Panc1 (cell line): ENCODE measurements at regions of chr19 and their contacts with region 1.

Region 1: DNA sequence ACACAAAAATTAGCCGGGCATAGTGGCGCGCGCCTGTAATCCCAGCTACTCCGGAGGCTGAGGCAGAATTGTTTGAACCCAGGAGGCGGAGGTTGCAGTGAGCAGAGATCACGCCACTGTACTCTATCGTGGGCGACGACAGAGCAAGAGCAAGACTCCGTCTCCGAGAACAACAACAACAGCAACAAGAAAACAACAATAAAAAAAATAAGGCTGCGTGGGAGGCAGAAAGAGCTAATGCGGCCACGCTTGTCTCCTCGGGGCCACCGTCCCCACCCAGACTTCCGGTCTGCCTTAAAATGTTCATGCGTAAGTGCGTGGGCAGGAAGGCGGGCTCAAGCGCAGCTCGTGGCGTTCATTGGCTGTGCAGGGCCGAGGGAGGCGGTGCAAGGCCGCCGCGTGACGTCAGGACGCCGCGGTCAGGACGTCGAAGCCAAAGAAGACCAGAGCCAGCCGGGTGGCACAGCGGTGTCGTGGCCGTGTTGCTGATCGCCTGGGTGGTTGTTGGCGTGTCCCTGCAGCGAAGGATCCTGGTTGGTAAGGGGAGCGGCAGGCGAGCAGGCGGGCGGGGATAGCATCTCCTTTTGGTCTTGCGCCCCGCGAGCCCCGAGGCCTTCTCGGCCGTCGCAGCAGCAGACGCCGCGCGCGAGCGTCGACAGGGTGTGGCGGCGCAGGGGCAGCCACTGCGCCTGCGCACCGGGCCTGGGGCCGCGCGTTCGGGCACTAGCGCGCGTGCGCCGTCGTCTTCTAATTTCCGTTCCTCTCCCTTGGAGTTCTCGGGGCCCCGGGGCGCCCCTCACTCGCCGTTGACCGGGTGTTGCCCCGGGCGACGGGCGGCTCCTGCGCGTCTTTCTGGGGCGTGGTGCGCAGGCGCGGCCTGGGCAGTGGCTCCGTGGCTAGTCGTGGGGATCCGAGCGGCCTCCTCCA is at the start of gene LENG8:
- DNase-seq: peak; percentile 94
- ATAC-seq: peak; percentile 97
- H3K4me3 ChIP-seq: peak within 1 kb of the TSS; percentile 85 to 97
- H3K27ac ChIP-seq: peak within 1 kb of the TSS; percentile 96
- H3K4me1 ChIP-seq: peaks cover 20% of the 10 kb centered on the region
- H3K27me3 ChIP-seq: no peaks in the 10 kb centered on the region
- CTCF ChIP-seq: no peak
- total RNA-seq, gene LENG8: 268 TPM

Region 2: GRCh38 chr19:54325194-54325621 is 123.8 kb before region 1 on chr19:
- CTCF ChIA-PET with region 1: no interaction called
- POLR2A ChIA-PET with region 1: no interaction called
- in situ Hi-C with region 1: no loop called
- intact Hi-C with region 1: no loop called
- DNase-seq: peak; percentile 53
- ATAC-seq: peak; percentile 82
- H3K4me3 ChIP-seq: no peak overlapping the region
- H3K27ac ChIP-seq: no peak overlapping the region
- H3K4me1 ChIP-seq: no peaks in the 10 kb centered on the region
- H3K27me3 ChIP-seq: peaks cover 7% of the 10 kb centered on the region; the same call in 1 of the 2 replicates
- CTCF ChIP-seq: peak; percentile 98

Region 3: GRCh38 chr19:54345938-54346386 is 103.1 kb before region 1 on chr19:
- CTCF ChIA-PET with region 1: no interaction called
- POLR2A ChIA-PET with region 1: no interaction called
- in situ Hi-C with region 1: no loop called
- intact Hi-C with region 1: no loop called
- DNase-seq: no peak
- ATAC-seq: no peak
- H3K4me3 ChIP-seq: no peak overlapping the region
- H3K27ac ChIP-seq: no peak overlapping the region
- H3K4me1 ChIP-seq: no peaks in the 10 kb centered on the region
- H3K27me3 ChIP-seq: peaks cover 9% of the 10 kb centered on the region
- CTCF ChIP-seq: no peak

Region 4: DNA sequence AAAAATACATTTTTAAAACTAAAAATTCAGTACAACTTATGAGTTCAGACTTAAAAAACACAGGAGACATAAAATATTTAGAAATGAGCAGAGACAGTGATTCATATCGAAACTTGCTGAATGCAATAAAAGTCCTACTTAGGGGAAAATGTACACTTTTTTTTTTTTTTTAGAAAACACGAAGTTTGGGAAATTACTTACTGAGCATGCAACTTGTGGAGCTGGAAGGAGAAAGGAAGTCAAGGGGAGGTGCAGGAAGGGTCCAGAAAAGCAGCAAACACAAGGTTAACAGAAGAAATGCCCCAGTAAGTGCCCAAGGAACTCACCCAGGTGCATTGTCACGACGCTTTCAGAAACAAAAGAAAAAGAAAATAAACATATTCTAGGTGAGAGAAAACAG is 65.7 kb before region 1 on chr19:
- CTCF ChIA-PET with region 1: no interaction called
- POLR2A ChIA-PET with region 1: no interaction called
- in situ Hi-C with region 1: no loop called
- intact Hi-C with region 1: no loop called
- DNase-seq: no peak
- ATAC-seq: no peak
- H3K4me3 ChIP-seq: no peak overlapping the region
- H3K27ac ChIP-seq: no peak overlapping the region
- H3K4me1 ChIP-seq: 0 out of 2 replicates have a peak, but pooled peaks cover 1% of the 10 kb centered on the region
- H3K27me3 ChIP-seq: peaks cover 26% of the 10 kb centered on the region
- CTCF ChIP-seq: no peak

Region 5: GRCh38 chr19:54463531-54464043 is 14.6 kb after region 1 on chr19 and contains the start of gene LENG9:
- CTCF ChIA-PET with region 1: no interaction called
- POLR2A ChIA-PET with region 1: interaction called, 20 read pairs
- in situ Hi-C with region 1: no loop called
- intact Hi-C with region 1: no loop called
- DNase-seq: no peak
- ATAC-seq: peak; percentile 62
- H3K4me3 ChIP-seq: peak within 1 kb of the TSS; percentile 56 to 70
- H3K27ac ChIP-seq: peak within 1 kb of the TSS; percentile 87
- H3K4me1 ChIP-seq: peaks cover 26% of the 10 kb centered on the region
- H3K27me3 ChIP-seq: no peaks in the 10 kb centered on the region
- CTCF ChIP-seq: no peak
- total RNA-seq, gene LENG9: 5.1 TPM